Kidney (tissue), 22 donors: ENCODE measurements at regions of chr2 and their contacts with region 1.

Region 1: GRCh38 chr2:176669398-176670174 is 400.3 kb downstream of the MTX2 start:
- DNase-seq: no peak
- H3K4me3 ChIP-seq: no peak overlapping the region
- H3K27ac ChIP-seq: no peak overlapping the region
- H3K4me1 ChIP-seq: peaks cover 0 to 3% (median 2%) of the 10 kb centered on the region in 3 donors
- H3K27me3 ChIP-seq: no peaks in the 10 kb centered on the region
- CTCF ChIP-seq: no peak

Region 2: DNA sequence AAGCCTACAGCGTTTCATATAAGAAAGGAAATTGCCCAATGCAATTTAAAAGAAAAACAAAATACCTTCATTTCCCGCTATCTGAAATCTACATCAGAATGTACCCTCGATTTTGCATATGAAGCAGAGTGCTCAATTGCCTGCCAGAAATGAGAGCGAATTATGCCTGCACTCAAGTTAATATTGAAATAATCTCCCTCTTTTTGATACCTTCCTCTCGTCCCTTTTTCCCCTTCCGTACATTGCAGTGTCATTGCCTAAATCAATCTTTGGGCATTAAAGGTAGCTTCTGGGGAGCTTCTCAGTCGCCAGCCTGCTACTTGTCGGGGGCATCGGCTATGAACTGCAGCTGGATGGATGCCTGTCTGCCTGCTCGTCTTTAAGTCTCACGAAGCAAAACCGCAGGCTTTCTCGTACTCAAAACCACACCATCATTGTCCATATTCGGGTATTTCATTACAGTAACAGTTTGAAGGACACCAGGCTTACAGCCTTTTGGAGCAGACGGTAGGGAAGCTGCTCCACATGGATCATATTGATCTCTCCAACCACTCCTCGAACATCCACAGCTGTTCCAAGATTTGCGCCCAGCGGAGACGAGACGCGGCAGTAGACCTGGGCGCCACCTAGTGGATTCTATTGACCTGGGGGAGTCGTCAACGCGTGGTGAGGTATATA is 479.0 kb after region 1 on chr2:
- intact Hi-C with region 1: loop called (anchors 10 kb)
- DNase-seq: peak; percentile 84 to 95 (median 90)
- H3K4me3 ChIP-seq: peak overlapping the region; percentile 63 to 75 (median 66)
- H3K27ac ChIP-seq: no peak overlapping the region
- H3K4me1 ChIP-seq: peaks cover 0 to 3% (median 0%) of the 10 kb centered on the region in 3 donors
- H3K27me3 ChIP-seq: peaks cover 2% of the 10 kb centered on the region
- CTCF ChIP-seq: peak; percentile 76